Dorsolateral prefrontal cortex (tissue), 120 donors: ENCODE measurements at regions of chrX and their contacts with region 1.

Region 1: DNA sequence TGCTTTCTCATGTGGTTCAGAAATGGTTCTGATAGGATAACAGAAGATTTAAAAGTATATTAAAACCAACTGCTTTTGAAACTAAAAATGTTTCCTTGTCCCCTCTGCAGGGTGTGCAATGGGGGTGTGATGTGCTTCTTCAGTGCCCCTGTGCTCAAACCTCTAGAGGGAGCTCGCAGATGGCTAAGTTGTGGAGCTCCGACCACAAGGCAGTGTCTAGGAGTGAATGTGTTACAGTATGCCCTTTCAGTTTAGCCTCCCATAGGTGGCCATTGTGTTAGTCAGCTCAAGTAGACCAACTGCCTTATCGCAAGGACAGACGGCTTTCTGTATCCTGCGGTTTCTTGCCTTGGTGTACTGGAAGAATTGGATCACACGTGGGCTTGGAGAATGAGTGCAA is 130.5 kb downstream of the TENT5D start:
- DNase-seq: no peak
- H3K4me3 ChIP-seq: no peak overlapping the region
- H3K27ac ChIP-seq: no peak overlapping the region
- H3K27me3 ChIP-seq: peaks cover 0 to 70% (median 7%) of the 10 kb centered on the region in 45 donors
- CTCF ChIP-seq: no peak

Region 2: GRCh38 chrX:80316526-80316925 is 234.2 kb before region 1 on chrX:
- intact Hi-C with region 1: no loop called
- DNase-seq: no peak
- H3K4me3 ChIP-seq: no peak overlapping the region
- H3K27ac ChIP-seq: no peak overlapping the region
- H3K27me3 ChIP-seq: peaks cover 0 to 73% (median 14%) of the 10 kb centered on the region in 45 donors
- CTCF ChIP-seq: no peak

Region 3: DNA sequence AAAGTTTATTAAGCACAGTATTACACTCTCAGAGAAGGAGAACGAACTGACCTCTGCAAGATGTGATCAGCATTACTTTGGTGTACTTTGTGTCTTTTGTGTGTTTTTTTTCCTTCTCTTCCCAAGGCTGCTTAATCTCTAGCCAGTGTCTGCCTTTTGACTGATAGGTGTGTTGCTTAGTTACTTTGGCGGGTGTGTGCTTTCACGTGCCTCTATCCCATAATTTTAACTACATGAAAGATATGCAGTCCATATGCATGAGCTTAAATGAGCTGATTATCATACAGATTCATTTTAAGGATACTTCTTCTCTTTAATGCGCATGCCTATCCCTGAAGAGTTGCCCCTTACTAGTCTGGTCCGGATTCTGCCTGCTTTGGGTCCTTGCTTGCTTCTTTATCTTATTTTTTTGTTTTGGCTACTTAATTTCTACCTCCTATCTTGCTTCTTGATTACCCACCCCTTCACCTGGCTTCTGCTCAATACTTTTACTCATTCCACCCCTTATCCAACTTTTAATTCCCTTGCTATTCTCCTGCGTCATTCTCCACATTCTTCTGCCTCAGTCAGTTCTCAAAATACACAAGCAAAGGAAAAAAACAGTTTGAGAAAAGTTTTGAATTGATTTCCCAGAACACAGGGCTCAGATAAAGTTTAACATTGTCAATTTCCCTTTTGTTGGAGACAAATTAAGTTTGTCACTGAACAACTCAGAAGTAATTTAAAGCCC is 51.5 kb after region 1 on chrX:
- intact Hi-C with region 1: loop called in 1 of 2 experiments (anchors 10 kb)
- DNase-seq: no peak
- H3K4me3 ChIP-seq: no peak overlapping the region
- H3K27ac ChIP-seq: no peak overlapping the region
- H3K27me3 ChIP-seq: peaks cover 0 to 54% (median 11%) of the 10 kb centered on the region in 45 donors
- CTCF ChIP-seq: no peak